WTC11 (cell line): ENCODE measurements at regions of chr14 and their contacts with region 1.

Region 1: DNA sequence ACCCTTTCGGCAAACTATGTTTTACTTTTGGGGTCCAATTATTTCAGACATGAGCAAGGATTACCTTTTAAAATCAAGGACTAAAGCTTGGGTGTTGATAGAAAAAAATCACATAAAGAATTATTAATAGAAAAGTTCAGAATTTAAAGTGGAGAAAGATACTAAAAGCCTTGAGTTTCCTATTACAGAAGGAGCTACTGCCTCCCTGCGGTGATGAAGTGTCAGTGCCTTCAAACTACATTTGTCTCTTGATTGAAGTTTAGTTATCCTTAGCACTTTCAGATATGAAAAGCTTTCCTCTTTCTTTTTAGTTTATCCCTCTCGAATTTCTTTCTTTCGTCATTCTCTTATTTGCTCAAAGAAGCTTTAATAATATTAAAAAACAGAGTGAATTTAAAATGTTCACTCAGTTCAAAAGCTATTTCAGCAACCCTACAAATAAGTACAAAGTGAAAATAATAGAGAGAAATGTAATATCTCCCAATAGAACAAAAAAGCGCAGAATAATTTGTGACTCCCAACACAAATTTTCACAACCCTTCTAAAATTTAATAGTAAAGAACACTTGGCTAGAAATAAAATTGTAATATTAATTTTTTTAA is 87.6 kb downstream of the SEC23A start:
- DNase-seq: peak; percentile 17
- ATAC-seq: peak; percentile 67
- H3K4me3 Mint-ChIP-seq: no peak overlapping the region
- H3K27ac Mint-ChIP-seq: no peak overlapping the region
- H3K4me1 Mint-ChIP-seq: peaks cover 20% of the 10 kb centered on the region
- H3K27me3 Mint-ChIP-seq: no peaks in the 10 kb centered on the region; the same call in 1 of the 2 replicates
- CTCF ChIP-seq: peak; percentile 47; the same call in 1 of the 2 replicates

Region 2: GRCh38 chr14:38721822-38722431 is 293.5 kb before region 1 on chr14:
- CTCF ChIA-PET with region 1: interaction called, 10 read pairs
- POLR2A ChIA-PET with region 1: no interaction called
- DNase-seq: peak; percentile 79
- ATAC-seq: peak; percentile 96
- H3K4me3 Mint-ChIP-seq: no peak overlapping the region
- H3K27ac Mint-ChIP-seq: no peak overlapping the region
- H3K4me1 Mint-ChIP-seq: peaks cover 6% of the 10 kb centered on the region
- H3K27me3 Mint-ChIP-seq: no peaks in the 10 kb centered on the region
- CTCF ChIP-seq: peak; percentile 82

Region 3: DNA sequence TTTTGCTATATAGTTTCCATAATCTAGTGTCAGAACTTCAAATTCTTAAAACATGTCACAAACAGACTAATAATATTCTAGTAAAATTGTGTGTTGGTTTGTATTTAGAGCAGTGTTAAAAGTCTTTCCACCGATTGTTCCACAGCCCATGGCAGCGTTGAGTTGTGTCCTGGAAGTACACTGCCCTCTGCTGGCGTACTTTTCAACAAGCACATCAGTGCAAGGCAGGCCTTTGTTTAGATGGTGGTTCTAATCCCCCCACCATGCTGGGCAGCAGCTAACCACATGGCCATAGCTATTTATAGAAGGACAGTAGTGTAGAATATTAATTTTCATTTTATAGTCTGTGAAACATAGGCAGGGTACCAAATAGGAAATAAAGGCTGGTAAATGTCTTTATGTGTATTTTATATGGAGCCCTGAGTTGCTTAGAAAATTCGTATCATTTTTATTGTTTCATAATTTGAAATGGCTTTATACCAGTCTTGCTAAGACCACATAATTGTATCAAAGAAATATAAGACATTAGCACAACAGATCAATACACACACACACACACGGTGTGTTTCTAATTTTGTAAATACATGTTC is 147.8 kb before region 1 on chr14:
- CTCF ChIA-PET with region 1: interaction called, 39 read pairs
- POLR2A ChIA-PET with region 1: no interaction called
- DNase-seq: peak; percentile 79
- ATAC-seq: peak; percentile 96
- H3K4me3 Mint-ChIP-seq: no peak overlapping the region
- H3K27ac Mint-ChIP-seq: no peak overlapping the region
- H3K4me1 Mint-ChIP-seq: peaks cover 19% of the 10 kb centered on the region
- H3K27me3 Mint-ChIP-seq: peaks cover 2% of the 10 kb centered on the region; the same call in 1 of the 2 replicates
- CTCF ChIP-seq: peak; percentile 78

Region 4: GRCh38 chr14:39034481-39035296 is 19.2 kb after region 1 on chr14:
- CTCF ChIA-PET with region 1: interaction called, 23 read pairs
- POLR2A ChIA-PET with region 1: no interaction called
- DNase-seq: peak; percentile 27
- ATAC-seq: peak; percentile 75
- H3K4me3 Mint-ChIP-seq: no peak overlapping the region
- H3K27ac Mint-ChIP-seq: no peak overlapping the region
- H3K4me1 Mint-ChIP-seq: no peaks in the 10 kb centered on the region
- H3K27me3 Mint-ChIP-seq: no peaks in the 10 kb centered on the region
- CTCF ChIP-seq: peak; percentile 39

Region 5: GRCh38 chr14:39080886-39081285 is 65.4 kb after region 1 on chr14:
- CTCF ChIA-PET with region 1: no interaction called
- POLR2A ChIA-PET with region 1: no interaction called
- DNase-seq: no peak
- ATAC-seq: no peak
- H3K4me3 Mint-ChIP-seq: no peak overlapping the region
- H3K27ac Mint-ChIP-seq: no peak overlapping the region
- H3K4me1 Mint-ChIP-seq: no peaks in the 10 kb centered on the region
- H3K27me3 Mint-ChIP-seq: no peaks in the 10 kb centered on the region; the same call in 1 of the 2 replicates
- CTCF ChIP-seq: no peak

Region 6: GRCh38 chr14:39243822-39244221 is 228.4 kb after region 1 on chr14:
- CTCF ChIA-PET with region 1: no interaction called
- POLR2A ChIA-PET with region 1: no interaction called
- DNase-seq: no peak
- ATAC-seq: no peak
- H3K4me3 Mint-ChIP-seq: no peak overlapping the region
- H3K27ac Mint-ChIP-seq: no peak overlapping the region
- H3K4me1 Mint-ChIP-seq: no peaks in the 10 kb centered on the region
- H3K27me3 Mint-ChIP-seq: no peaks in the 10 kb centered on the region
- CTCF ChIP-seq: no peak